Activated T-helper 1 cell treated with anti-CD3 and anti-CD28 coated beads, Interleukin-12 subunit alpha, Interleukin-12 subunit beta, Interleukin-2, Interleukin-4 antibody, amounts not matched to agents 30 ng/mL and 10 ng/mL and 1 ng/mL, durations not matched to agents 14 hours and 24 hours and 36 hours (primary cell): ENCODE measurements at regions of chr18 and their contacts with region 1.

Region 1: GRCh38 chr18:24075731-24076130 is 61.2 kb downstream of the TTC39C start:
- DNase-seq: no peak
- H3K4me3 Mint-ChIP-seq: no peak overlapping the region
- H3K27ac Mint-ChIP-seq: peak overlapping the region; percentile 58
- H3K4me1 Mint-ChIP-seq: peaks cover 41% of the 10 kb centered on the region
- H3K27me3 Mint-ChIP-seq: no peaks in the 10 kb centered on the region

Region 2: DNA sequence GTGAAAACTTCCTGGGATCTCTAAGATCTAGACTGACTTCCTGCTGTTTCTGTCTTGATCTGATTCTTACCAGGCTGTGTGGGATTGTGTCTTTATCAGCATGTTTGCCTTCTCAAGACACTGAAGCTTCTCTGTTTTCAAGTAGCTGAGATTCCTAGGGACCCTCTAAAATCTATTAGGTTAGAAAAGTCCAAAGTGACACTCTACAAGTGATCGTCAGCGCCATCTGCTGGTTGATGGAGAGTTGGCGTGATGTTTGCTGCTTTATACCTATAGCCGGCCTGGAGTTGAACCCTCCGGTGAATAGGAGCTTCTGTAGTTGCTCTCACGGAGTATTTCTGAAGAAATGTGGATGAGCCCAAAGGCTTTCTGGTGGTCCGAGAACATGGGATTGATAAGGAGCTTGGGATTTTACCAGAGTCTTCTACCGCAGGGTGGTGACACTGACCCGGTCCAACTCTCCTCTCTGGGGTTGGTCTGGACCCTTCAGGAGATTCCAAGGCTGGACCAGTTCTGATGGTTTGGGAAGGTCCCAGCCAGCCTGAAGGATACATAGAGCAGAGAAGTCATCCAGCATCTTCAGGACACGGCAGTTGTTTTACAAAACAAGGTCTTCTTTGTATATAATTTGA is 157.2 kb before region 1 on chr18:
- intact Hi-C with region 1: loop called (anchors 1 kb)
- DNase-seq: peak; percentile 54
- H3K4me3 Mint-ChIP-seq: no peak overlapping the region
- H3K27ac Mint-ChIP-seq: no peak overlapping the region
- H3K4me1 Mint-ChIP-seq: peaks cover 29% of the 10 kb centered on the region
- H3K27me3 Mint-ChIP-seq: peaks cover 26% of the 10 kb centered on the region

Region 3: GRCh38 chr18:23964282-23965238 is 111.2 kb before region 1 on chr18:
- intact Hi-C with region 1: loop called (anchors 2 kb)
- DNase-seq: no peak
- H3K4me3 Mint-ChIP-seq: no peak overlapping the region
- H3K27ac Mint-ChIP-seq: peak overlapping the region; percentile 62
- H3K4me1 Mint-ChIP-seq: peaks cover 43% of the 10 kb centered on the region
- H3K27me3 Mint-ChIP-seq: peaks cover 8% of the 10 kb centered on the region

Region 4: GRCh38 chr18:24054130-24054529 is 21.6 kb before region 1 on chr18:
- intact Hi-C with region 1: loop called (anchors 1 kb)
- DNase-seq: no peak
- H3K4me3 Mint-ChIP-seq: peak overlapping the region; percentile 12
- H3K27ac Mint-ChIP-seq: peak overlapping the region; percentile 74
- H3K4me1 Mint-ChIP-seq: peaks cover 76% of the 10 kb centered on the region
- H3K27me3 Mint-ChIP-seq: no peaks in the 10 kb centered on the region

Region 5: DNA sequence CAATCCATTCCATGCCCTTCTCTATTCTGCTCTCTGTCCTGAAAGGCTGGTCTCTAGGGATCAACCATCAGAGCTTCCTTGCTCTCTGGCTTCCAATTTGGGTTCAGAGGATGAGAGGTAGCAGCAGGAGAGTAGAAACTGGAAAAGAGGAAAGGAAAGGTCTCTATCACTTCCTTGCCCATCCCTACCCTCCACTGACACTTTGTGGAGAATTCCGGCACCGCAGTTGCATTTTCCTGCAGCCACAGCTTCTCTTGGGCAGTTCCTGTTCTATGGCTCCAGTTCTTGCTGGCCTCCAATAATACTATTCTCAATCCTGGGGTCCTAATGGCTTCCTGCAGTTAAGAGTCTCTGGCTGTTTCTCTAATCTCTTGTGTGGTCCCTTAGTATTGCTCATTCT is 337.4 kb after region 1 on chr18:
- intact Hi-C with region 1: no loop called
- DNase-seq: no peak
- H3K4me3 Mint-ChIP-seq: no peak overlapping the region
- H3K27ac Mint-ChIP-seq: no peak overlapping the region
- H3K4me1 Mint-ChIP-seq: peaks cover 21% of the 10 kb centered on the region
- H3K27me3 Mint-ChIP-seq: peaks cover 10% of the 10 kb centered on the region